AG04449 (cell line): ENCODE measurements at regions of chr17 and their contacts with region 1.

Region 1: GRCh38 chr17:1908699-1909309 is 79.0 kb downstream of the RPA1 start:
- DNase-seq: peak; percentile 14
- H3K4me3 ChIP-seq: peak overlapping the region; percentile 44
- CTCF ChIP-seq: peak; percentile 74

Region 2: GRCh38 chr17:1847191-1847590 is 61.6 kb before region 1 on chr17:
- CTCF ChIA-PET with region 1: no interaction called
- POLR2A ChIA-PET with region 1: no interaction called
- DNase-seq: no peak
- H3K4me3 ChIP-seq: no peak overlapping the region
- CTCF ChIP-seq: no peak

Region 3: DNA sequence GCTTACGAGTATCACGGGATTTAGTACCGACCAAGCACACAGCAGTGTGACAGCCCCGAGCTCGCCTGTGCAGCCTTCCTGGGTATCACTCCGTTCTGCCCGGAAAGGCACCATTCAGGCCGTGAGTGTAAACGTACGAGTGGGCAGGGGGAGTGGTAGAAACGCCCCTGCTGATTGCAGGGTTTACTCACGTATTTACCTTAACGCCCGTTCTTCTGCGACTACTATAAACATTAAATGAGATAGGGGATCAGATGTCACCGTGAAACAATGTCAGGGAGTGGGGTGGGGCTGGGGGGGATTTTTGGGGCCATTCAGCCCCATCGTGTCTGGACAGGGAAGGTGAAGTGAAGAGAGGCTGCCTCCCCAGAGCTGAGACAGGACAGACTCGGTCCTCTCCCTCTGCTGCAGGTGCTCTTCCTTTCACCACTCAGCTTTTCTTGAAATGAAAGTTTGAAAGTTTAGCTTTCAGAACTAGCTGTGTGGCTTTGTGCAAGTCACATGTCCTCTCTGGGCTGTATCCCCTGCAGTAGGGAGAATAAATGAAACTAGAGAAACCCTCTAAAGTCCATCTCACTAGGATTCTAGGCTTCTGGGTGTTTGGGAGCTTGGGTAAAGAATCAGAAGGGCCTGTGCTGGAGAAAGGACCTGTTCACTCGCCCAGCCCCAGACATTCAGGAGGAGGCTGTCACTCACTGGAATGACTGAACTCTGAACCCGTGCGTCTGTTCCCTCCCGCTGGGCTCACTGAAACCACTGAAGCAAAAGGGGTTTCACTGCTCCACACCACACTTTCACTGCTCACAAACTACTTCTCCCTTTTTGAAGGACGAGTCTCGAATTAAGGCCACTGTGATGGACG is 12.3 kb before region 1 on chr17:
- CTCF ChIA-PET with region 1: interaction called, 20 read pairs
- POLR2A ChIA-PET with region 1: no interaction called
- DNase-seq: no peak
- H3K4me3 ChIP-seq: no peak overlapping the region
- CTCF ChIP-seq: no peak

Region 4: GRCh38 chr17:1919201-1919600 is 10.4 kb after region 1 on chr17:
- CTCF ChIA-PET with region 1: interaction called, 26 read pairs
- POLR2A ChIA-PET with region 1: no interaction called
- DNase-seq: no peak
- H3K4me3 ChIP-seq: no peak overlapping the region
- CTCF ChIP-seq: no peak

Region 5: DNA sequence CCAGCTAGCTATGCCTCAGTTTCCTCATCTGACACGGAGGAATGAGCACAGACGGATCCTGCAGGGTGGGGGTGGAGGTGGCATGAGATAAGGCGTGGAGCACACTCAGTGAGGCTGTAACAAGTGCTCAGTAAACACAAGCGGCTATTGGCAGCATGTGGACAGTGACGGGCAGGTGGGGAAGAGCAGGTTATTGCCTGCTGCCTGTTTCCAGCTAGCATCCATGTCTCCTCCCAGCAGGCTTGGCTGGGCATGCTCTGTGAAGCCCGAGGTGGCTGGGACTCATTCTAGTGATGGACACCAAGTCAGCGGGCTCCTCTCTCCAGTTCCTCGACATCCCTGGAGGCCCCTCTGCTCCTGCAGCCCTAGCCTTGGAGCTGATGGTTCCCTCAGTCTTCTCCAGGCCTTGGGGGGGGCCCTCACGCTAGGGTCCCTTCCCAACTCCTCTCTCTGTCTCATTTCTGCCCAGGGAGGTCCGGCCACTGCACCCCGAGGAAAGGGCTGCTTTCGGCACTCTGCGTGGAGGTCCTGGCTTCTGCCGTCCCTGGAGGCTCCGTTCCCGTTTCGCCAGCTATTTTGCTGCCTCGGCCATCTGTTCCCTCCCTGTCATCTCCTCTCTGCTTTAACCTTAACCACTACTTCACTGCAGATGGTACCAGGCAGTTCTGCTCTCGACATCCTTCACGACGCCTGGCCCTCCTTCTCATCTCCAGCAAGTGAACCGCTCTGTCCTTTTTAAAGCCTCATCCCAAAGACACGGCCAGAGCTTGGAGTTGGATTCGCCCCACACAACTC is 110.1 kb after region 1 on chr17:
- CTCF ChIA-PET with region 1: interaction called, 223 read pairs
- POLR2A ChIA-PET with region 1: no interaction called
- DNase-seq: no peak
- H3K4me3 ChIP-seq: no peak overlapping the region
- CTCF ChIP-seq: no peak

Region 6: DNA sequence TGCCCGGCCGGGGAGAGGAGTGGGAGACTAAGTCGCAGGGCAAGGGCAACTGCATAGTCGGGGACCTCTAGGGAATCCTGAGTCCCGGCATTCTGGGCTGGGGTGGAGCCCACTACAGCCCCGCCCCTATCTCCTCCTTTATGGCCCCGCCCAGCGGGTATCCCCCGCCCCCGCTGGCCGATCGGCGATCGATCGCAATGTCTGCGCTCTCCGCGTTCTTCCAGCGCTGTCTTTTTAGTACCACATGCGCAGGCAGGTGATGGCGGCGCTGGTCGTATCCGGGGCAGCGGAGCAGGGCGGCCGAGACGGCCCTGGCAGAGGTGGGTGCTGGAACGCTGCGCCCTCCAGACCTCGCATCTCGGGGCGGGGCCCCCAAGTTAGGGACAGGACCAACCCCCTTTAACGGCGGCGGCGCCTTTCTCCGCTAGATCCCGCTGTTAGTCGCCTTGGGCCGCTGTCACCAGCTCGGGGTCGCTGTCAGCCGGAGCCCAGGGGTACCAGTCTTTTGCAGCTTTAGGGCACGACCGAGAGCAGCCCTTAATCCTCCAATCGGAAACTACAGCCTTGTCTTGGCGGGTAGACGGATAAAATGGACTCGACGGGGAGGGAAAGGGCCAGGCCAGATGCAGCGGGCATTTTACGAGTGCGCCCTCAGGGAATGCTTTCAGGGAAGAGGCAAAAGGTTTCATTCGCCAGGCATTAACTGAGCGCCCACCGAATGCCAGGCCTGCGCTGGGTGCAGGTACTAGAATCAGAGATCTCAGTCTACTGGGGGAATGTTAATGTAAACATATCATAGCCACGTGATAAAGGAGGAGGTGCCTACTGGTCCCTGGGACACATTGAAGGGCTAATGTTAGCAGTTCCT is 121.3 kb after region 1 on chr17 and contains the start of gene DPH1:
- CTCF ChIA-PET with region 1: interaction called, 223 read pairs
- POLR2A ChIA-PET with region 1: interaction called, 3 read pairs
- DNase-seq: no peak
- H3K4me3 ChIP-seq: peak within 1 kb of the TSS; percentile 100
- CTCF ChIP-seq: no peak

Region 7: DNA sequence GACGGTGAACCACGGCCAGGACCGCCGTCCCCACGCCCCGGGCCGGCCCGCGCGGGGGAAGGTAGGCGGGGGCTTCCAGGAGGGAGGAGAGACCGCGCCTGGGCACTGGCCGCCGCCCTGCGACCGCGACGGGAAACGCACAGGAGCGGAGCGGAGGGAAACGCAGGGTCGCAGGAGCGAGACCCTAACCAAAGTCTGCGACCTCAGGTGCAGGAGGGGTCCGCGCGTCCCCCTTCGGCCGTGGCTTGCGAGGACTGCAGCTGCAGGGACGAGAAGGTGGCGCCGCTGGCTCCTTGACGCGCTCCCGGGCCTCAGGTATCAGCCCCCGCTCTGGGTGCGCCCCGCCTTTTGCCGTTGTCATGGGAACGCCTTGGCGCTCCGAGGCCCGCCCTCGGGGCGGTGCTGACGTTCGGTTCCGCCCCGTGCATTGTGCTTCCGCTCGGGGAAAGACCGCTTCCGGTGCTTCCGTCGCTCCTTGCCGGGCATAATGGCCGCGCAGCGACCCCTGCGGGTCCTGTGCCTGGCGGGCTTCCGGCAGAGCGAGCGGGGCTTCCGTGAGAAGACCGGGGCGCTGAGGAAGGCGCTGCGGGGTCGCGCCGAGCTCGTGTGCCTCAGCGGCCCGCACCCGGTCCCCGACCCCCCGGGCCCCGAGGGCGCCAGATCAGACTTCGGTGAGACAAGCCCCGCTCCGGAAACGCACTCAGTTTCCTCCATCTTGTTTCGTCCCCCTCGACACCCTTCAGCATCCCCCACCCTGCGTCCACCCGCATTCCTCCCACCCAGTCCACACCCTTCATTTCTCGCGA is 133.0 kb after region 1 on chr17 and contains the start of gene OVCA2:
- CTCF ChIA-PET with region 1: interaction called, 56 read pairs
- POLR2A ChIA-PET with region 1: no interaction called
- DNase-seq: no peak
- H3K4me3 ChIP-seq: peak within 1 kb of the TSS; percentile 81
- CTCF ChIP-seq: peak; percentile 81

Region 8: DNA sequence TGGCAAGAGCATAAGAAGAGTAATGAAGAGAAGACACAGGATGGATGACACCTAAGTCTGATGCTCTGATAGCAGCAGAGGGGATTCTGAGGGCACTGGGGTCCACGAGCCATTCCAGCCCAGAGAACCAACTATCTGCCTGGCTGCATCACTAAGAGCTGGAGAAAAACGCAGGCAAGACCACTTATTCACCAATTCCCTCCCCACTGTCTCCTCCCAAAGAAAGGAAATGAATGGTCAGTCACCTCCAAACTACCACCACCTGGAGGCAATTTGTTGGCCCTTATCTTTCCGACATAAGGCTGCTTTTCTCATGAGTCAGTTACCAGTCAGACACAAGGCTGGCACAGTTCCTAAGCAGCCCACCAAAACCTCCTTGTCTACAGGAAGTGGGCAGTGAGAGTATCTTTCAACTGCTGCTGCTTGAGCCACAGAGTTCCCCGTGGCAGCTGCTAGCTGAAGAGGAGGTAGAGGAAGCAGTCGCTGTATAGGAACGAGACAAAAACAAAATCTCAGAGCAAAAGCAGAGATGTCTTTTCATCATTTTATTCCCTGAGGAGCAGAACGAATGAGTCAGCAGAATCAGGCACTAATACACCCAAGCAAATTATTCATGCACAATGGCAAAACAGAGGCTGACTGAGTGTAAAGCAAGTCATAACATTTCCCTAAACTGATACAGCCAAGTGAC is 283.7 kb after region 1 on chr17:
- CTCF ChIA-PET with region 1: no interaction called
- POLR2A ChIA-PET with region 1: no interaction called
- DNase-seq: no peak
- H3K4me3 ChIP-seq: no peak overlapping the region
- CTCF ChIP-seq: no peak